Activated B cell treated with CpG ODN at 0.5 μM for 24 hours (primary cell): ENCODE measurements at regions of chr2 and their contacts with region 1.

Region 1: GRCh38 chr2:151664520-151664919 is 69.8 kb downstream of the NEB start:
- DNase-seq: no peak
- ATAC-seq: peak; percentile 94
- H3K4me3 Mint-ChIP-seq: no peak overlapping the region
- H3K27ac Mint-ChIP-seq: peak overlapping the region; percentile 10
- H3K4me1 Mint-ChIP-seq: peaks cover 14% of the 10 kb centered on the region
- H3K27me3 Mint-ChIP-seq: no peaks in the 10 kb centered on the region
- CTCF ChIP-seq: no peak

Region 2: DNA sequence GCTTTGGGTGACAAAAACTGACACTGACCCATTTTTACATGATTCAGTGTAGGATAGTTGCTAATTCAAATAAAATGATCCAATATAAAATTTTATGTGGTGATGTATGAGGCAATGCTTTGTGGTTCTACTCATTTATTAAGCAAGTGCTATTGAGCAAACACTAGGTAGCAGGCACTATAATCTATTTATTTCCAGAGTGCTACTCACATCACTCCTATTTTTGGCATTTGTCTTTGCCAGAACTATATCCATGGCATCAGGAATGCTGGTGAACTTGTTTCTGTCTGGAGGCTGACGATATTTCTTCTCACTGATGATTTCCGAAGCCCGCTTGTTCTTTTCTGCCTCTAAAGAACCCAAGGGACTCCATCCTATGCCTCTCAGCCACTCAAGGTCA is 14.6 kb before region 1 on chr2:
- CTCF ChIA-PET with region 1: no interaction called
- POLR2A ChIA-PET with region 1: no interaction called
- intact Hi-C with region 1: loop called (anchors 2 kb)
- DNase-seq: no peak
- ATAC-seq: no peak
- H3K4me3 Mint-ChIP-seq: no peak overlapping the region
- H3K27ac Mint-ChIP-seq: no peak overlapping the region
- H3K4me1 Mint-ChIP-seq: no peaks in the 10 kb centered on the region
- H3K27me3 Mint-ChIP-seq: no peaks in the 10 kb centered on the region
- CTCF ChIP-seq: no peak

Region 3: GRCh38 chr2:152335010-152335725 is 670.6 kb after region 1 on chr2 and contains the start of gene FMNL2:
- CTCF ChIA-PET with region 1: no interaction called
- POLR2A ChIA-PET with region 1: no interaction called
- intact Hi-C with region 1: no loop called
- DNase-seq: peak; percentile 73
- ATAC-seq: peak; percentile 88
- H3K4me3 Mint-ChIP-seq: peak within 1 kb of the TSS; percentile 85
- H3K27ac Mint-ChIP-seq: peak within 1 kb of the TSS; percentile 67
- H3K4me1 Mint-ChIP-seq: peaks cover 12% of the 10 kb centered on the region
- H3K27me3 Mint-ChIP-seq: peaks cover 5% of the 10 kb centered on the region
- CTCF ChIP-seq: no peak
- total RNA-seq, gene FMNL2: 2.8 and 4.0 TPM in 2 replicates